ENCODE measurements at regions of chr16 and their contacts with region 1.

Region 1: GRCh38 chr16:65884018-65884417 is 482.5 kb upstream of the CDH5 start:
- DNase-seq: peak; percentile 88
- ATAC-seq: peak; percentile 94
- H3K4me3 ChIP-seq: no peak overlapping the region
- H3K27ac ChIP-seq: peak overlapping the region; percentile 93
- H3K4me1 ChIP-seq: peaks cover 28% of the 10 kb centered on the region
- H3K27me3 ChIP-seq: no peaks in the 10 kb centered on the region
- CTCF ChIP-seq: no peak

Region 2: GRCh38 chr16:65658349-65658748 is 225.7 kb before region 1 on chr16:
- CTCF ChIA-PET with region 1: no interaction called
- POLR2A ChIA-PET with region 1: no interaction called
- intact Hi-C with region 1: loop called (anchors 2 kb)
- DNase-seq: peak; percentile 92
- ATAC-seq: peak; percentile 80
- H3K4me3 ChIP-seq: peak overlapping the region; percentile 51
- H3K27ac ChIP-seq: peak overlapping the region; percentile 99
- H3K4me1 ChIP-seq: peaks cover 43% of the 10 kb centered on the region
- H3K27me3 ChIP-seq: no peaks in the 10 kb centered on the region
- CTCF ChIP-seq: no peak

Region 3: GRCh38 chr16:65809627-65810026 is 74.4 kb before region 1 on chr16:
- CTCF ChIA-PET with region 1: no interaction called
- POLR2A ChIA-PET with region 1: no interaction called
- intact Hi-C with region 1: loop called (anchors 5 kb)
- DNase-seq: peak; percentile 86
- ATAC-seq: peak; percentile 97
- H3K4me3 ChIP-seq: no peak overlapping the region
- H3K27ac ChIP-seq: peak overlapping the region; percentile 57
- H3K4me1 ChIP-seq: peaks cover 11% of the 10 kb centered on the region
- H3K27me3 ChIP-seq: no peaks in the 10 kb centered on the region
- CTCF ChIP-seq: no peak

Region 4: DNA sequence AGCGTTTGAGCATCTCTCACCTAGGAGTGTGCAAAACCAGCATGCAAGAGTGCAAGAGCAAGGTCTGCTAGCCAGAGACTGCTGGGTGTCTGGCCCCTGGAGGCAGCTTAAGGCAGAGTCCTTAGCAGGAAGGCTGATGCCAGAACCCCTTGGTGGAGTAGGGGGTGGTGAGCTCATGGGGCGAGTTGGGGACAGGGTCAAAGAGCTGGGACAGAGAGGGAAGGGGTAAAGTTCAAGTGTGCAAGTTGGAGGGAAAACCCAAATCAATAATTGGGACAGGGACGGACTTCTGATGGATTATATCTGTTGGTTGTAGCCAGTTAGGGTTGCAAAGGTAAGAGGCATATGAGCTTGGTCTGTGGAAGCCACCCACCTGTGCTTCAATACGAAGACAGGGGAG is 38.9 kb after region 1 on chr16:
- CTCF ChIA-PET with region 1: no interaction called
- POLR2A ChIA-PET with region 1: no interaction called
- intact Hi-C with region 1: loop called (anchors 1 kb)
- DNase-seq: no peak
- ATAC-seq: no peak; the same call in 1 of the 2 replicates
- H3K4me3 ChIP-seq: no peak overlapping the region
- H3K27ac ChIP-seq: no peak overlapping the region
- H3K4me1 ChIP-seq: peaks cover 11% of the 10 kb centered on the region; the same call in 1 of the 2 replicates
- H3K27me3 ChIP-seq: no peaks in the 10 kb centered on the region
- CTCF ChIP-seq: no peak

Region 5: DNA sequence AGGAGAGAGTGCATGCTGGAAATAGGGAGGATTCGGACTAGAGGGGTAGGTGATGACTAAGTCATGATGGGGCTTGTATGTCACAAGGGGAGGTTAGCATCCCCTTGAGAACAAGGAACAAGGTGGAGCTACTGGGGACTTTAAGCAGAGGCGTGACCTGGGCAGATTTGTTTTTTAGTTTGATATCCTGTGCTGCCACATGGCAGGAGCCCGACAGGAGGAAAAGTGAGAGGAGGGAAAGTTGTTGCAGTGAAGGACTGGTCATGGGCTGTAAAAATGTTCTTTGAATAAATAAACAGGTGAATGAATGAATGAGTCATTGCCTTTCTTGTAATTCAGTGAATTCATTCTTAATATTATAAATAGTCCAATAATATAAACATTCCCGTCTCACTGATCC is 117.4 kb after region 1 on chr16:
- CTCF ChIA-PET with region 1: no interaction called
- POLR2A ChIA-PET with region 1: no interaction called
- intact Hi-C with region 1: loop called (anchors 1 kb)
- DNase-seq: peak; percentile 74
- ATAC-seq: peak; percentile 86
- H3K4me3 ChIP-seq: no peak overlapping the region
- H3K27ac ChIP-seq: peak overlapping the region; percentile 45
- H3K4me1 ChIP-seq: peaks cover 31% of the 10 kb centered on the region
- H3K27me3 ChIP-seq: no peaks in the 10 kb centered on the region
- CTCF ChIP-seq: no peak

Measured in PC-3 (cell line).